ENCODE measurements at regions of chr7 and their contacts with region 1.

Region 1: DNA sequence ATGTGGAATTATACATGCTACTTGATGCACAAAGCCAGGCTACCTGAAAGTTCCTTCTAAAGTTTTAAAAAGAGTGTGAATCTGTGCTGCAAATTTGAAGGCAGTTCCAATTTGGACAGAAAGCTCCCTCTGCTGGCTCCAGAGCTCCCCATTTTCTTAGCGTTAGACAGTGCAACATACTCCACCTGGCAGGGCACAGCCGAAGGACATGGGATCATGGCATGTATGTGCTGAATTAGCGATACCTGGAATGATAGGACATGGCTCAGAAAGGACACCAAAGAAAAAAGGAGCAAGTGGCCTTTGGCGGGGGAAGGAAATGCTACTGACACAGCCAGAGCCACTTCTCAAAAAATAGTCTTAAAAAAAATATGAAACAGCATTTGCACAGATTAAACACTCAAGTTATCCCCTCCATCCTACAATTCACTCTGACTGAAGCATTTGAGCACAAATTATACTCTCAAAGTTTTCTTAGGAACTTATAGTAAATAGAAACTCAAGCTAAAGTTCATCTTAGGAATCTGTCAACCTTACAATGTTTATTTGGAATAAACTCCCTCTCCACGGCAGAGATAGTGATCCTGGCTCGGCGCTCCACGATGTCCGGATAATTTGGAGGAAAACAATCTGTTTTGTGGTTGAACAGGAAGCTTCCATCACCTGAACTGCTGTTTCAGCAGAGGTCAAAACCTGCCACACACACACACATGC is 80.0 kb downstream of the C7orf25 start:
- DNase-seq: no peak
- H3K4me3 ChIP-seq: no peak overlapping the region
- CTCF ChIP-seq: peak; percentile 63

Region 2: DNA sequence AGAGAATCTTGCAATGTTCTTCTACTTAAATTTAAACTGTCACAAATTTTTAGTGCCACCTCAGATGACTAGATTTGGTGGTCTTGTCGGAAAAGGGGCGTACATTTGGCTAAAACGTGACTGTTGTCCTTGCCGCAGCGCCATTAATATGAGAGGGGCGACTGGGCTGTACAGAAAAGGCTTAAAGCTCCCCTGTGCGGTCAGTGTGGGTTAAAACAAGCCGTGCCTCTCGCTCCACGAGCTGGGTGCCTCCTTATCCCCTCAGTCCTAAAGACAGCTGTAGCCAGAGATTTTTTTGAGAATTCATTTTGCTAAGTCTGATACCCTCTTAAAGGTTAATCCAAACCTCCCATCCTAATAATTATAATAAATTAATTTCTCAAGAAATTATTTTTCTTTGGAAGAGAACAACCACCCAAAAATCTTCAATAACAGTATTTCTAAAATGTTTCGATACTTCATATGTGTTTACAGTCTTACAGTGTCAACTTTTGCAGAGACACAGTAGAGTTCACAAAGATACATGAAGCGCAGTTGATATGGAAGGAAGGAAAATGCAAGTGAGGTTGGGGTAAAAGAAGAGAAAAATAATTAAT is 11.4 kb after region 1 on chr7:
- CTCF ChIA-PET with region 1: interaction called, 12 read pairs
- POLR2A ChIA-PET with region 1: no interaction called
- DNase-seq: no peak
- H3K4me3 ChIP-seq: no peak overlapping the region
- CTCF ChIP-seq: peak; percentile 56

Region 3: GRCh38 chr7:42914421-42915045 is 82.7 kb after region 1 on chr7:
- CTCF ChIA-PET with region 1: no interaction called
- POLR2A ChIA-PET with region 1: no interaction called
- DNase-seq: no peak
- H3K4me3 ChIP-seq: no peak overlapping the region
- CTCF ChIP-seq: no peak

Measured in AG04449 (cell line).